K562 (cell line): ENCODE measurements at regions of chr22 and their contacts with region 1.

Region 1: DNA sequence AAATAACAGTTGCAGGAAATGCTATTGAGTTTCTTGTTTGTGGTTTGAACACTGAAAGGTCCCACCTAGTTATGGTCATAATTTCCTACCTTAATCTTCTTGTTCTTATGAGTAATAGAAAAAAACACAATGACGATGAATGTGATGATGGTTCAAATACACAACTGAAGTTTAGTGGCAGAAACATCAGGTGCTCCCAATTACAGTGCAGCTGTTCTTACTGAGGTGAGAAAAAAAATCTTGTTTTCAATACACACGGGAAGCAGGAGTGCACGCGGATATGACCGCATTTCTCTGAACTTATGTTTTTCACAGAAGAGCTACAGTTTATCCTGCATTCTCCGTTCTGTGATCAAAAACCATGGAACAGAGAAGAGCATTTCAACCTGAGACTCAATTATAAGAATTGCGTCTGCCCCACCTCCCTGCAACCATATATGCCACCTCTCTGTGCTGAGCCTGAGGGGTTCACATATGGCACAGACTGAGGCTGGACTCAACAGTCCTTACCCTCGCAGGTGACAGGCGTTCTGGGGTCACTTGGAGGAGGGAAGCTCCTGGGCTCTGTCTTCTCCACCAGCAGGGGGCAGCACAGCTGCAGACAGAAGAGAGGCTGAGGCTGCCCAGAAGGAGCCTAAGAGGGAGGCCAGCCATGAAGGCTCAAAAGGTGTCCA is 99.7 kb upstream of the IGLL5 start:
- DNase-seq: peak; percentile 97 to 100 (median 99)
- ATAC-seq: peak; percentile 96
- H3K4me3 ChIP-seq: no peak overlapping the region
- H3K27ac ChIP-seq: no peak overlapping the region
- H3K4me1 ChIP-seq: peaks cover 0 to 3% of the 10 kb centered on the region in 2 experiments; a peak in 1 of 5 replicates
- H3K27me3 ChIP-seq: peaks cover 26 to 30% of the 10 kb centered on the region in 2 experiments; a peak in 4 of 5 replicates
- CTCF ChIP-seq: no peak
- EP300 ChIP-seq: no peak
- POLR2A ChIP-seq: no peak
- RAD21 ChIP-seq: no peak

Region 2: DNA sequence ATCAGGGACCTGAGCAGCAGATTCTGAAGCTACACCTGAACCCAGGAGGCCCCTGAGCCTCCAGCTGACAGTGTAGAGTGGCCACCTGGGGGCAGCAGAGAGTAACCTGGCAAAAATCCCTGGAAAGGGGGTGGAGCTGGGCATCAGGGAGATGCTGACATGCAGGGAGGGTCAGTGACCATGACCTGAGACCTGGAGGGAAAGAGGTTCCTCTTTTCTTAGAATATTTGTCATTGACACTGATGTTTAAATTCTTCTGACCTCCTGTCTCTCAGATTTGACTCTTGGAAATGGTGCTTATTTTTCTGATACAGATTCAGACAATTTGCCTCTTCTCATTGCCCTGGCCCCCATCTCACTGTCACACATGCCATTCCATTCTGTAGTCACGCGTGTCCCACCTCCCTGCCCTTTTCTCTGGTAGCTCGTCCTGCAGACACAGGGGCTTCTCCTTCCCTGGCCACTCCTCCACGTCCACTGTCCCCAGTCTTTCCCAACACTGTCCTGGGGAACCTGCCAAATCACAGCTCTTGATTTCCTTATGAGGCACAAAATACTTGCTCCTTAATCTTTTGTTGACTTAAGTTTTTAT is 17.5 kb before region 1 on chr22:
- CTCF ChIA-PET with region 1: interaction called, 7 read pairs
- POLR2A ChIA-PET with region 1: interaction called, 15 read pairs
- in situ Hi-C with region 1: no loop called
- intact Hi-C with region 1: no loop called
- DNase-seq: peak; percentile 96 to 100 (median 98)
- ATAC-seq: peak; percentile 94
- H3K4me3 ChIP-seq: no peak overlapping the region
- H3K27ac ChIP-seq: no peak overlapping the region
- H3K4me1 ChIP-seq: no peaks in the 10 kb centered on the region
- H3K27me3 ChIP-seq: peaks cover 0 to 32% of the 10 kb centered on the region in 2 experiments; a peak in 2 of 5 replicates
- CTCF ChIP-seq: peak in 1 of 3 experiments; percentile 100; a peak in 2 of 6 replicates
- EP300 ChIP-seq: peak; percentile 71
- POLR2A ChIP-seq: no peak
- RAD21 ChIP-seq: no peak

Region 3: DNA sequence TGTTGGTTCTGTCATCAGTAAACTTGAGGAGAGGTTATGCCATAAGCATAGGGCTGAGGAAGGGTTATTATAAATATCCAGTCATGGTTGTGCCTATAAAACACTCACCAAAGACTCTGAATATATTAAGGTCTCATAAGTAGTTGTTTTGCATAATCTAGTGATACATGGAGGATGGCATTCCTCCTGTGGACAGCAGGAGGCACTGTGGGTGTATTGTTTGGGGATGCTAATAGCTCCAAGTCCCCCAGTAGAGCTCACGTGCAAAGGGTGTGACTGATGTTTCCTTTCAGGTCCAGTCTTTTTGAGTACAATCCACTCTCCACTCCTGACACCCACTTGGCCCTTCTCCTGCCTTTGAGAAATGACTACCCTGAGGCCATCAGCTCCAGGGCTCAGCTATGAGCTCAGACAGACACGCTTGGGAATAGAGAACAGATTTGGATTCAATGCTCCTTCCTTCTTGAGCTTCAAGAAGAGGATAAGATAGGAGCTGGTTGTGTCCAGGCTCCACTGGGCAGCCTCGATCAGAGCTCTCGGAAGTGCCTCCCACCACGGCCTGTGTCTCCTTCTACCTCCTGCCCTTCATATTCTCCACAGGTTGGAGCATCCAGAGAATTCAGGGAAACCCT is 14.5 kb after region 1 on chr22:
- CTCF ChIA-PET with region 1: interaction called, 8 read pairs
- POLR2A ChIA-PET with region 1: interaction called, 21 read pairs
- in situ Hi-C with region 1: no loop called
- intact Hi-C with region 1: no loop called
- DNase-seq: peak; percentile 84 to 94 (median 91)
- ATAC-seq: peak; percentile 90
- H3K4me3 ChIP-seq: no peak overlapping the region
- H3K27ac ChIP-seq: no peak overlapping the region
- H3K4me1 ChIP-seq: no peaks in the 10 kb centered on the region
- H3K27me3 ChIP-seq: peaks cover 8 to 37% of the 10 kb centered on the region in 2 experiments; a peak in 3 of 5 replicates
- CTCF ChIP-seq: no peak
- EP300 ChIP-seq: no peak
- POLR2A ChIP-seq: no peak
- RAD21 ChIP-seq: no peak

Region 4: DNA sequence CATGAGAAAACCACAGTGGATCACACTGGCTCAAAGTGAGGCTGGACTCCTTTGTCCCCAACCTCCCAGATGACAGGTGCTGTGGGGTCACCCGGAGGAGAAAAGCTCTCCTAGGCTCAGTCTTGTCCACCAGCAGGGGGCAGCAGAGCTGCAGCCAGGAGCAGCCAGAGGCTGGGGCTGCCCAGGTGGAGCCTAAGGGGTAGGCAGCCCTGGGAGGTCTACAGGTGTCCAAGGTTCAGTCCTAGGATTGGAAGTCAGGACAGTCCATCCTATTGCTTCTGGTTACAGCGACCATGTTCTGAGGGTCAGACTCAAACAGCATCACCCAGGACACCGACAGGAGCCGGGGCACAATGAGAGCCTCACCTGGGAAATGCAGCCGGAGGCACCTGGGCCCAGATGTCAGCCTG is 22.1 kb after region 1 on chr22:
- CTCF ChIA-PET with region 1: interaction called, 4 read pairs
- POLR2A ChIA-PET with region 1: interaction called, 10 read pairs
- in situ Hi-C with region 1: no loop called
- intact Hi-C with region 1: no loop called
- DNase-seq: peak; percentile 97 to 100 (median 98)
- ATAC-seq: peak; percentile 96
- H3K4me3 ChIP-seq: no peak overlapping the region
- H3K27ac ChIP-seq: no peak overlapping the region
- H3K4me1 ChIP-seq: peaks cover 0 to 4% of the 10 kb centered on the region in 2 experiments; a peak in 1 of 5 replicates
- H3K27me3 ChIP-seq: peaks cover 8 to 19% of the 10 kb centered on the region in 2 experiments; a peak in 3 of 5 replicates
- CTCF ChIP-seq: no peak
- EP300 ChIP-seq: no peak
- POLR2A ChIP-seq: no peak
- RAD21 ChIP-seq: no peak

Region 5: DNA sequence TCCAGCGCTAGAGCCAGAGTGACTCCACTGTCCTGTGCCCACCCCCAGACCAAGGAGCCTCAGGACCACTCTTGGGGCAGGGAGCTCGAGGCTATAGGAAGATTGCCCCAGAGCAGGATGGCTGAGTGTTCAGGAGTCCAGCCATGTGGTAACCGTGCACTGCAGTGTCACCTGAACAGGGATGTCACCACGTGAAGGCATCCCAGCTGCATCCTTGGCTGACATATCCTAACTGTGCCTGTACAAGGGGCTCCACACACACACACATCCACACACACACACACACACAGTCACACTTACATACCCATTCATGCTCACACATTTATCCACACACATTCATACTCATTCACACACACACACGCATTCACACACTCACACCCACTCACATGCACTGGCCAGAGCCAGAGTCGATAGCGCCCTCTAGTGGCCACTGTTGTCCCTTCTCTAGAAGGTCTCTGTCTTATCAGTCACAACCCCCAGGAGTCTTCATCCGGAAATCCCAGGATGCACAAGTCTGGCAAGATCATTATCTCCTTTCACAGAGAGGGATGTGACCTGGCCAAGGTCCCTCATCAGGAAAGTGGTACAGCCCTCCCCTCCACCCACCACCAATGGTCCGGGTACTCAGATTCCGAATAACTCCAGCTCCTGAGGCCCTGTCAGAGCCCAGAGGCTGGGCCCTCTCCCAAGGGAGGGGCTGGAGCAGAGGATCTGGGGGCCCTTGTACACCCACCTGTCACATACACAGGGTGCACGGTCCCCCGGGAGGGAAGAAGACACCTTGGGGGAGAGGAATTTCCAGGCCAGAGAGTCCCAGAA is 154.8 kb after region 1 on chr22:
- CTCF ChIA-PET with region 1: interaction called, 10 read pairs
- POLR2A ChIA-PET with region 1: interaction called, 4 read pairs
- in situ Hi-C with region 1: no loop called
- intact Hi-C with region 1: no loop called
- DNase-seq: peak; percentile 99 to 100 (median 100)
- ATAC-seq: peak; percentile 94
- H3K4me3 ChIP-seq: no peak overlapping the region
- H3K27ac ChIP-seq: no peak overlapping the region
- H3K4me1 ChIP-seq: peaks cover 0 to 3% of the 10 kb centered on the region in 2 experiments; a peak in 1 of 5 replicates
- H3K27me3 ChIP-seq: peaks cover 19 to 38% of the 10 kb centered on the region in 2 experiments; a peak in 4 of 5 replicates
- CTCF ChIP-seq: no peak
- EP300 ChIP-seq: no peak
- POLR2A ChIP-seq: no peak
- RAD21 ChIP-seq: no peak